ENCODE measurements at regions of chr19 and their contacts with region 1.

Region 1: DNA sequence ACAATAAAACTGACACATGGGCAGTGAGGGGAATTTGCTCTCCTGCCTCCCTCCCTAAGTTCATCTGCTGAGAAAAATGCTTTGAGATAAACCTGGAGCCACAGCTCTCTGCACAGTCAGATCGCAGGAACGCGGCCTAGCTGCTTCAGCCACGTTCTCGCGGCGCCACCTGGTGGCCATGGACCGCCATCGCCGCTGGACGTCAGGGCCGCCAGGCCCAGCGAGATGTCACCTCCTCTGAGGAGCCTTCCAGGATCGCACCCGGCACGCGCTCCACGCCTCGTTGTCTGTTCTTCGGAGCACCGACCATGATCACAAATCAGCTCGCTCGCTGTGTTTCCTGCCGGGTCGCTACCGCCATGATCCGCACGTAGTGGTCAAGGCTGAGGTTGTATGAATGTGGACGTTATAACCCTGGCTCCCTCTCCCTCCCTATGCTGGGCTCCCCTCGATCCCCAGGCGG is 20.6 kb upstream of the USP29 start:
- DNase-seq: peak; percentile 46
- H3K4me3 ChIP-seq: no peak overlapping the region
- H3K27ac ChIP-seq: no peak overlapping the region
- H3K4me1 ChIP-seq: peaks cover 0 to 3% (median 0%) of the 10 kb centered on the region in 4 donors
- H3K27me3 ChIP-seq: no peaks in the 10 kb centered on the region
- CTCF ChIP-seq: peak; percentile 59 to 77 (median 70)
- EP300 ChIP-seq: no peak
- POLR2A ChIP-seq: no peak

Region 2: DNA sequence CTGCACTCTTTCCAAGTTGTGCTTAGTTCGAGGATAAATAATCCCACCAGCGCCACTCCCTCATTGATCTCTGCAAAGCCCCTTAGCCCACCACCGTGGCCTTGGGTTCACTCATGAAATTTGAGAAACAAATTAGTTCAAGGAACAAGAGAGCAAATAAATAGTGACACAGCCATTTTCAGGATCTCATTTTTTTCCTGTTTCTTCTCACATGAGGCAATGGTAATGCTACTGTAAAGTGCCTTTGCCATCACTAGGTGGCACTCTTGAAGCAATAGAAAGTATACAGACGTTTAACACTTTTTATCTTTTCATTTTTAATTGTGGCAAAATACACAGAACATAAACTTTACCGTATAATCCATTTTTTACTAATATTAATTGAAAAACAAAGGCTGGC is 350.9 kb before region 1 on chr19:
- in situ Hi-C with region 1: loop called in 2 of 4 experiments (anchors 25 kb)
- intact Hi-C with region 1: loop called (anchors 10 kb)
- DNase-seq: no peak
- H3K4me3 ChIP-seq: no peak overlapping the region
- H3K27ac ChIP-seq: no peak overlapping the region
- H3K4me1 ChIP-seq: no peaks in the 10 kb centered on the region
- H3K27me3 ChIP-seq: no peaks in the 10 kb centered on the region
- CTCF ChIP-seq: peak; percentile 18 to 52 (median 35)
- EP300 ChIP-seq: no peak
- POLR2A ChIP-seq: no peak

Region 3: GRCh38 chr19:56765137-56765536 is 334.1 kb before region 1 on chr19:
- in situ Hi-C with region 1: loop called in 1 of 4 experiments (anchors 25 kb)
- intact Hi-C with region 1: no loop called
- DNase-seq: peak; percentile 26
- H3K4me3 ChIP-seq: peak overlapping the region; percentile 2 to 47 (median 22)
- H3K27ac ChIP-seq: no peak overlapping the region
- H3K4me1 ChIP-seq: peaks cover 0 to 3% (median 0%) of the 10 kb centered on the region in 4 donors
- H3K27me3 ChIP-seq: no peaks in the 10 kb centered on the region
- CTCF ChIP-seq: no peak
- EP300 ChIP-seq: no peak
- POLR2A ChIP-seq: no peak

Measured in transverse colon (tissue), 4 donors.